ENCODE measurements at regions of chr1 and their contacts with region 1.

Region 1: DNA sequence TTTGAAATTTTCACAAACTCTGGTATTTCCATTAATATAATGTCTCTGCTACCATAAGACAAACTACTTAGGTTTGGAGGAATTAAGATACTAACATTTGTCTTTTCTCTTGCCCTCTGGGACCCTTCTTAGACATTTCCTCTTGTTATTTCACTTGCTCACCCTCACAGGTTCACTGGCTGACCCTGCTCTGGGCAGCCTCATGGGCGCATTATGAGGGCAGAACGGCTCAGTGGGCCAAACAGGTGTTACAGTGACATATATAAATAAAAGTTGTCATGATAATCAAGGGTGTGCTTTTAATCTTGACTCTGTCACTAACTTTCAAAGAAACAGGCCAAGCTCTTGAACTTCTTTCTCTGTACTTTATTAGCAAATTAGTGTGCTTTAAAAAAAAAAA is 46.5 kb downstream of the ZNHIT6 start:
- DNase-seq: no peak
- ATAC-seq: no peak
- H3K4me3 ChIP-seq: no peak overlapping the region
- H3K27ac ChIP-seq: no peak overlapping the region
- H3K4me1 ChIP-seq: peaks cover 0 to 7% (median 0%) of the 10 kb centered on the region in 9 donors
- H3K27me3 ChIP-seq: no peaks in the 10 kb centered on the region
- CTCF ChIP-seq: no peak

Region 2: GRCh38 chr1:85607126-85607912 is 54.4 kb before region 1 on chr1:
- intact Hi-C with region 1: loop called in 1 of 10 experiments (anchors 10 kb)
- DNase-seq: no peak
- ATAC-seq: no peak
- H3K4me3 ChIP-seq: no peak overlapping the region
- H3K27ac ChIP-seq: no peak overlapping the region
- H3K4me1 ChIP-seq: peaks cover 0 to 11% (median 6%) of the 10 kb centered on the region in 9 donors
- H3K27me3 ChIP-seq: no peaks in the 10 kb centered on the region
- CTCF ChIP-seq: no peak